ENCODE measurements at regions of chr1 and their contacts with region 1.

Region 1: DNA sequence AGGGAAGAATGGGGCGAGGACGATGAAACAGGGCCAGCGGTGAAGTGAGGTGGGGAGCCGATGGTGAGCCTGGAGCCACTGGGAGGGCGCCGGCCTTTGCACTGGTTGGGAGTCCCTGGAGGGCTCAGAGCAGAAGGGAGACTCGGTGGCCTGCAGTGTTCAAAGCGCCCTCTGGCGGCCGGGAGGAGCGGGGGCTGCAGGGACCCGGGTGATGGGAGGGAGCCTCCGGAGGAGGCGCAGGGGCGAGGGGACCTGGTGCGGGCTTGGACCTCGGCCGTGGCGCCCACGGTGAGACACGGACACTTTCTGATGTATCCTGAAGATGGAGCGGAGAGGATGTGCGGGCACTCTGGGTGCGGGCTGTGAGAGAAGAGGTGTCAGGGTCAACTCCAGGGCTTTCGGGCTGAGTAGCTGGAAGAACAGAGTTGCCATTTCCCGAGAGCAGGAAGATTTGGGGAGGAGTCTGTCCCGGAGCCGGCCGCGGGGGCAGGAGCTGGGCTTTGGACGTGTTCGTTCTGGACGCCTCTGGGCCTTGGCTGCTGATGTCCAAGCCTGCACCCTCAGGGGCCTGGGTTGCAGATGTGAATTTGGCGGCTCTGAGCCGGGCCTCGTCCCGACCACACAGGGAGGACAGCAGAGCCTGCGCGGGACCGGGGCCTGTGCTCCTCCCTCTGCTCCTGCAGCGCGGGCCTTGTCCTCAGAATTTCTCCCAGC is 29.7 kb downstream of the HEYL start:
- DNase-seq: peak in 3 of 4 donors; percentile 46 to 93 (median 55)
- ATAC-seq: peak; percentile 85
- H3K4me3 ChIP-seq: no peak overlapping the region
- H3K27ac ChIP-seq: no peak overlapping the region
- H3K4me1 ChIP-seq: peaks cover 0 to 5% of the 10 kb centered on the region in 2 donors
- H3K27me3 ChIP-seq: peaks cover 0 to 8% of the 10 kb centered on the region in 2 donors
- CTCF ChIP-seq: peak; percentile 83 to 89

Region 2: GRCh38 chr1:39132505-39133339 is 477.1 kb before region 1 on chr1:
- intact Hi-C with region 1: no loop called
- DNase-seq: peak in 3 of 4 donors; percentile 79 to 86 (median 82)
- ATAC-seq: peak; percentile 80
- H3K4me3 ChIP-seq: no peak overlapping the region
- H3K27ac ChIP-seq: peak overlapping the region; percentile 79 to 86
- H3K4me1 ChIP-seq: peaks cover 38 to 72% of the 10 kb centered on the region in 2 donors
- H3K27me3 ChIP-seq: no peaks in the 10 kb centered on the region
- CTCF ChIP-seq: peak in 1 of 2 donors; percentile 27

Region 3: DNA sequence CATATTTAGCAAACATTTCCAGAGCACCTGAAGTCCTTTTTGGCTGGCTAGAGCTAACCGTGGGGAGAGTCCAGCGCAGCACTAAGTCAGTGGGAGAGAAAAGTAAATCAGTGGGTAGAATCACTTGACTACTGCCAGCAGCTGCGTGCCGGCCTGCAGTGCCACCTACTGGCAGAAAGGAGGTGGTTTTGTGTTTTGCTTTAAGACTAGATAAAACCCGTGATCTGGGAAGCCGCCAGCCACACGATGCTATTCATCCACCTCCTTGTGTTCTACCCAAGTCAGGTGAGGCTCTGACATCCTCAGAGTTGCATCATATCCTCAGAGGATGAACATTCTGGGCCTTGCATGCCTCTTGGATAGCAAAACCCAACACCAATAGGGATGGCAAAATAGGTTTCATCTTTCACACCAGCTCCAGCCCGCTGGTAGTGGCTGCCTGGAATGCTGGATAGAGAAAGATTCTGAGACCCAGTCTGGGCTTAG is 43.8 kb after region 1 on chr1:
- intact Hi-C with region 1: loop called (anchors 5 to 10 kb)
- DNase-seq: peak; percentile 72 to 86 (median 80)
- ATAC-seq: peak; percentile 89
- H3K4me3 ChIP-seq: no peak overlapping the region
- H3K27ac ChIP-seq: no peak overlapping the region
- H3K4me1 ChIP-seq: peaks cover 0 to 4% of the 10 kb centered on the region in 2 donors
- H3K27me3 ChIP-seq: peaks cover 0 to 10% of the 10 kb centered on the region in 2 donors
- CTCF ChIP-seq: peak; percentile 85 to 86

Region 4: GRCh38 chr1:39717809-39718208 is 108.0 kb after region 1 on chr1:
- intact Hi-C with region 1: loop called in 1 of 2 experiments (anchors 5 kb)
- DNase-seq: no peak
- ATAC-seq: no peak
- H3K4me3 ChIP-seq: no peak overlapping the region
- H3K27ac ChIP-seq: no peak overlapping the region
- H3K4me1 ChIP-seq: no peaks in the 10 kb centered on the region
- H3K27me3 ChIP-seq: peaks cover 0 to 35% of the 10 kb centered on the region in 2 donors
- CTCF ChIP-seq: no peak

Region 5: DNA sequence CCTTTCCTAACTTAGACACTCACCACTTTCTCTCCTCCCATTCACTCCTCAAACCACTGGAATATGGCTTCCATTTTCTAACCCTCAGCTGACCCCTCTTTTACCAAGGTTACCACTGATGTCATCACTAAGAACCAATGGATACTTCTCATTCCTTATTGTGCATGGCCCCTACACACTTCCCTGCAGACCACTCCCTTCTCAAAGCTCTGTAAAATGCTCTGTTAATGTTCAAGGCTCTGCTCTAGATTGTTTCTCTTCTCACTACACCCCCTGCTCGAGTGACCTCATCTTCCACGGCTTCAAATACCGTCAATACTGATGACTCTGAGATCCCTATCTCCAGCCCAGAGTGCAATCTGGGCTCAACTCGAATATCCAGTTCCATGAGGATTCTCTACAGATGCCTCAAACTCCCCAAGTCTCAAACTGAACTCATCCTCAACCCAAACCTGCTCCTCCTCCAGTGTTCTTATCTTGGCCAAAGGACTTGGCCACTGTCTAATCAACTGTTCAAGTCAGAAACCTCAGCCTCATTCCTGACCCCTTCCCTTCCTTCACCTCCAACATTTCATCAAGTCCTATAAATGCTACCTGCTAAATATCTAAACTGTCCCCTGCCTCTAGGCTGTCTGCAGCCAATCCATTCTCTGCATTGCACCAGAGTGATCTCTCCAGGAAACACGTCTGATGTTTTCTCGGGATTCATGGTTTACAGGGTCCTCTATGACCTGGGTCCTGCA is 220.2 kb after region 1 on chr1:
- intact Hi-C with region 1: no loop called
- DNase-seq: no peak
- ATAC-seq: no peak
- H3K4me3 ChIP-seq: no peak overlapping the region
- H3K27ac ChIP-seq: no peak overlapping the region
- H3K4me1 ChIP-seq: no peaks in the 10 kb centered on the region
- H3K27me3 ChIP-seq: peaks cover 0 to 3% of the 10 kb centered on the region in 2 donors
- CTCF ChIP-seq: no peak

Region 6: GRCh38 chr1:40183055-40183710 is 573.4 kb after region 1 on chr1:
- intact Hi-C with region 1: no loop called
- DNase-seq: no peak
- ATAC-seq: no peak
- H3K4me3 ChIP-seq: no peak overlapping the region
- H3K27ac ChIP-seq: no peak overlapping the region
- H3K4me1 ChIP-seq: peaks cover 0 to 22% of the 10 kb centered on the region in 2 donors
- H3K27me3 ChIP-seq: no peaks in the 10 kb centered on the region
- CTCF ChIP-seq: no peak